Aorta (tissue), 5 donors: ENCODE measurements at regions of chr19 and their contacts with region 1.

Region 1: DNA sequence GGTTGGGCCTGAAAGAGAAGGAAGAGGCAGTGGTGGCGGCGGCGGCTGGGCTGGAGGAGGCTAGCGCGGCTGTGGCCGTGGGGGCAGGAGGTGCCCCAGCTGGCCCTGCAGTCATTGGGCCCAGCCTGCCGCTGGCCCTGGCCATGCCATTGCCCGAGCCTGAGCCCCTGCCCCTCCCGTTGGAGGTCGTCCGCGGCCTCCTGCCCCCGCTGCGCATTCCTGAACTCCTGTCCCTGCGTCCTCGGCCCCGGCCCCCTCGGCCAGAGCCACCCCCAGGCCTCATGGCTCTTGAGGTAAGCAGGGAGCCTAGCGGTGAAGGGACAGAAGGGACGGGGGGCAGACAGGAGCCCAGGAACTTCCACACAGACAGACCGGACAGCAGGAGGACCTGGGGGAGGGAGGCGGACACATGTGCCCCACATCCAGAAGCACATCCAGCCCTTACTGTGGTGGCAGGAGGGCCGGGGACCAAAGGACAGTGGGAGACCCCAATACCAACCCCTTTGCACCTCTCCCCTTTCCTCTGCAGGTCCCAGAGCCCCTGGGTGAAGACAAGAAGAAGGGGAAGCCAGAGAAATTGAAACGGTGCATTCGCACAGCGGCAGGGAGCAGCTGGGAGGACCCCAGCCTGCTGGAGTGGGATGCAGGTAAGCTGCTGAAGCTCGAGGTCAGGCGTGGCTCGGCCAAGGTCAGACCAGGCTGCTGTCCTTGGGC is 5.0 kb downstream of the RBM42 start:
- DNase-seq: no peak
- ATAC-seq: no peak
- H3K4me3 ChIP-seq: no peak overlapping the region
- H3K27ac ChIP-seq: no peak overlapping the region
- H3K4me1 ChIP-seq: no peaks in the 10 kb centered on the region
- H3K27me3 ChIP-seq: no peaks in the 10 kb centered on the region

Region 2: DNA sequence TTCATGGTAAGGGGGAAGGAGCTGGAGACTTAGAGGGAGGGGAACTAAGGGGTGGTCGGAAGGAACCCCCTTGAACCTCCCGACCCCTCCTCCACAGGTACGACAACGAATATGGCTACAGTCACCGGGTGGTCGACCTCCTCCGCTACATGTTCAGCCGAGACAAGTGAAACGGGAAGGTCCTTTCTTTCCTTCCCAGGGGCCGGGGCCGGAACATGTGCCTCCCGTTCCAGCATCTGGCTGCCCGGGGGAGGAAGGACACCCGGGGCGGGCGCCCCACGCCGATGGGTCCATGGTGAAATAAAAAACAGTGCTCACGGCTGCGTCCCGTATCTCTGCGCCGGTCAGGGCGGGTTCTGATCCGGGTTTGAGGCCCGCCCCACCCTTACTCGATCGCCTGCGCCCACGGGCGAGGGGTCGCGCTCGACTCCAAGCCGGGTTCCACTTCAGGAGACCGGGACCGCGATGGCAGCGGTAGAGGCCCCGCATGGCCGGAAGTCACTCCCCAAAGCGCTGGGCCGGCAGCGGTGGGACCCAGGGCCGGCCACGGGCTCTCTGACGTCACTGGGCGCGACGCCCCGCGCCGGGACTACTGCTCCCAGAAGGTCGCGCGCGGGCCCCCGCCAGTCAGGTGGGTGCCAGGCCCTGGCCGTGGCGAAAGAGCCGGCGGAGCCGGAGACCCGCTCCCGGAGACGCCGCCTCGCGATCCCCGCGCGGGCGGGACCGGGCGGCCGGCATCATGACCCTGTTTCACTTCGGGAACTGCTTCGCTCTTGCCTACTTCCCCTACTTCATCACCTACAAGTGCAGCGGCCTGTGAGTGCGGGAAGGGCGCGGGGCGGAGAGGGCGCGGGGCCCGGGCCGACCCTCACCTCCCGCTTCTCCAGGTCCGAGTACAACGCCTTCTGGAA is 88.6 kb before region 1 on chr19 and contains the start of gene TMEM147:
- intact Hi-C with region 1: loop called in 1 of 2 experiments (anchors 5 kb)
- DNase-seq: peak; percentile 96 to 99
- ATAC-seq: peak; percentile 96
- H3K4me3 ChIP-seq: peak within 1 kb of the TSS; percentile 62 to 80
- H3K27ac ChIP-seq: no peak within 1 kb of the TSS
- H3K4me1 ChIP-seq: no peaks in the 10 kb centered on the region
- H3K27me3 ChIP-seq: no peaks in the 10 kb centered on the region
- total RNA-seq, gene TMEM147: 48.0 to 52.2 TPM

Region 3: GRCh38 chr19:35790981-35791813 is 157.3 kb after region 1 on chr19:
- intact Hi-C with region 1: no loop called
- DNase-seq: no peak
- ATAC-seq: no peak
- H3K4me3 ChIP-seq: no peak overlapping the region
- H3K27ac ChIP-seq: no peak overlapping the region
- H3K4me1 ChIP-seq: no peaks in the 10 kb centered on the region
- H3K27me3 ChIP-seq: no peaks in the 10 kb centered on the region